ENCODE measurements at regions of chr11 and their contacts with region 1.

Region 1: DNA sequence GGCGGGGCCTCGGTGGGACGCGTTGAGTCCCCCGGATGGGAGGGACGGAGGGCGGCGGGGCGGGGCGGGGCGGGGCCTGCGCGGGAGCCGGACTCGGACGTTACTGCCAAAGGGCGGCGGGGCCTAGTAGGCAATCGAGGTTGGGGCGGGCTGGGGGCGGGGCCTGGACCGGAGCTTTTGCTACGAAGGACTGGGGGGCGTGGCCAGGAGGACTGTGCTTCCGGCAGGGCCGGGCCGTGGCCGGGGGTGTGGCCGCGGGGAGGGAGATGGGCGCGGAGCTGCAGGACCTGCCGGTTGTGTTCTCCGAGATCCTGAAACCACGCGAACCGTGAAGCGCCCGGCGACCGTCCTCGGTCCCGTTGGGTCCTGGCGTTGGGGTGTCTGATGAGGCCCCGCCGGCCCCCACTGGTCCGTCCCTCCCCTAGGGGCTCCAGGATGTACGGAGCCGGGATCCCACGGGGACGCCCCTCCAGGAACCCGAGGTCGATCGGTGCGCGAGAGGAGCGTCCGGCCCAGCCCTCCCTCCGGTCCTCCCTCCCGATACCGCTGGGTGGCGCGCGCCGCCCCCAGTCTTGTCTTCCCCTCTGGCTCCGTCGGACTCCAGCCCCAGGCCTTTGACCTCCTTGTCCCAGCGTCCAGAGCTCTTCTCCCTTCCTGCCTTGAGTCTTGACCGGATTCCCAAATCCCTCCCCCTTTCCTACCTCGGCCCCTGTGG is 648 bp upstream of the NUDT8 start:
- DNase-seq: peak; percentile 97
- ATAC-seq: peak; percentile 79
- H3K4me3 ChIP-seq: peak overlapping the region in 4 of 5 experiments; percentile 68 to 76 (median 74)
- H3K4me3 Mint-ChIP-seq: peak overlapping the region; percentile 90
- H3K27ac ChIP-seq: peak overlapping the region; percentile 85
- H3K27ac Mint-ChIP-seq: peak overlapping the region; percentile 90
- H3K4me1 ChIP-seq: peaks cover 14 to 19% of the 10 kb centered on the region in 2 donors
- H3K4me1 Mint-ChIP-seq: peaks cover 17% of the 10 kb centered on the region
- H3K27me3 ChIP-seq: no peaks in the 10 kb centered on the region
- H3K27me3 Mint-ChIP-seq: no peaks in the 10 kb centered on the region
- CTCF ChIP-seq: peak; percentile 84

Region 2: DNA sequence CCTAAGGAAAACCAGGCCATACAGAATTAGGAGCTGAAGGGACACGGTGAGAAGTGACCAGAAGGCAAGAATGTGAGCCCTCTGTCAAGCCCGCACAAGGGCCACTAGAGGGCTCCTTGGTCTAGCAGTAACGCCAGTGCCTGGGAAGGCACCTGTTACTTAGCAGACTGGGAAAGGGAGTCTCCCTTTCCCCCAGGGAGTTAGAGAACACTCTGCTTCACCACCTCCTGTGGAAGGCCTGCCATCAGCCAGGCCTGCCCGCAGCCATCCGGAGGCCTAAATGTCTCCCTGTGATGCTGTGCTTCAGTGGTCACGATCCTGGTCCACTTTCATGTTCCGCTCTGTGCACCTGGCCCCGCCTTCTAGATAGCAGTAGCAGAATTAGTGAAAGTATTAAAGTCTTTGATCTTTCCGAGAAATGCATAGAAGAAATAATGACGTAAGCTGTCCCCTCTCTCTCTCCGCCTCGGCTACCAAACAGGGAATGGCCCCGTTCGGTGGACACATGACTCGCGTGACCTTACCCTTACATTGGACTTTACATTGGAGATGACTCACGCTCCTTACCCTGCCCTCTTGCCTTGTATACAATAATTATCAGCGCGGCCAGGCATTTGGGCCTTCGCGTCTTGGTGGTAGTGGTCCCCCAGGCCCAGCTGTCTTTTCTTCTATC is 57.5 kb before region 1 on chr11:
- CTCF ChIA-PET with region 1: interaction called, 17 read pairs
- POLR2A ChIA-PET with region 1: no interaction called
- intact Hi-C with region 1: loop called (anchors 1 kb)
- DNase-seq: peak; percentile 69
- ATAC-seq: no peak
- H3K4me3 ChIP-seq: no peak overlapping the region
- H3K4me3 Mint-ChIP-seq: no peak overlapping the region
- H3K27ac ChIP-seq: no peak overlapping the region
- H3K27ac Mint-ChIP-seq: no peak overlapping the region
- H3K4me1 ChIP-seq: no peaks in the 10 kb centered on the region
- H3K4me1 Mint-ChIP-seq: peaks cover 3% of the 10 kb centered on the region
- H3K27me3 ChIP-seq: peaks cover 0 to 33% (median 9%) of the 10 kb centered on the region in 4 experiments
- H3K27me3 Mint-ChIP-seq: peaks cover 28% of the 10 kb centered on the region
- CTCF ChIP-seq: peak; percentile 80

Region 3: GRCh38 chr11:67606492-67607201 is 23.7 kb before region 1 on chr11 and contains the start of gene NDUFV1:
- CTCF ChIA-PET with region 1: interaction called, 15 read pairs
- POLR2A ChIA-PET with region 1: no interaction called
- intact Hi-C with region 1: loop called (anchors 1 kb)
- DNase-seq: peak; percentile 97
- ATAC-seq: peak; percentile 99
- H3K4me3 ChIP-seq: peak within 1 kb of the TSS; percentile 70 to 90 (median 88)
- H3K4me3 Mint-ChIP-seq: peak within 1 kb of the TSS; percentile 95
- H3K27ac ChIP-seq: peak within 1 kb of the TSS; percentile 43 to 72
- H3K27ac Mint-ChIP-seq: peak within 1 kb of the TSS; percentile 90
- H3K4me1 ChIP-seq: peaks cover 13 to 17% of the 10 kb centered on the region in 2 donors
- H3K4me1 Mint-ChIP-seq: peaks cover 20% of the 10 kb centered on the region
- H3K27me3 ChIP-seq: peaks cover 0 to 16% (median 5%) of the 10 kb centered on the region in 4 experiments
- H3K27me3 Mint-ChIP-seq: peaks cover 18% of the 10 kb centered on the region
- CTCF ChIP-seq: peak; percentile 82
- total RNA-seq, gene NDUFV1: 232 and 238 TPM in 2 replicates

Region 4: DNA sequence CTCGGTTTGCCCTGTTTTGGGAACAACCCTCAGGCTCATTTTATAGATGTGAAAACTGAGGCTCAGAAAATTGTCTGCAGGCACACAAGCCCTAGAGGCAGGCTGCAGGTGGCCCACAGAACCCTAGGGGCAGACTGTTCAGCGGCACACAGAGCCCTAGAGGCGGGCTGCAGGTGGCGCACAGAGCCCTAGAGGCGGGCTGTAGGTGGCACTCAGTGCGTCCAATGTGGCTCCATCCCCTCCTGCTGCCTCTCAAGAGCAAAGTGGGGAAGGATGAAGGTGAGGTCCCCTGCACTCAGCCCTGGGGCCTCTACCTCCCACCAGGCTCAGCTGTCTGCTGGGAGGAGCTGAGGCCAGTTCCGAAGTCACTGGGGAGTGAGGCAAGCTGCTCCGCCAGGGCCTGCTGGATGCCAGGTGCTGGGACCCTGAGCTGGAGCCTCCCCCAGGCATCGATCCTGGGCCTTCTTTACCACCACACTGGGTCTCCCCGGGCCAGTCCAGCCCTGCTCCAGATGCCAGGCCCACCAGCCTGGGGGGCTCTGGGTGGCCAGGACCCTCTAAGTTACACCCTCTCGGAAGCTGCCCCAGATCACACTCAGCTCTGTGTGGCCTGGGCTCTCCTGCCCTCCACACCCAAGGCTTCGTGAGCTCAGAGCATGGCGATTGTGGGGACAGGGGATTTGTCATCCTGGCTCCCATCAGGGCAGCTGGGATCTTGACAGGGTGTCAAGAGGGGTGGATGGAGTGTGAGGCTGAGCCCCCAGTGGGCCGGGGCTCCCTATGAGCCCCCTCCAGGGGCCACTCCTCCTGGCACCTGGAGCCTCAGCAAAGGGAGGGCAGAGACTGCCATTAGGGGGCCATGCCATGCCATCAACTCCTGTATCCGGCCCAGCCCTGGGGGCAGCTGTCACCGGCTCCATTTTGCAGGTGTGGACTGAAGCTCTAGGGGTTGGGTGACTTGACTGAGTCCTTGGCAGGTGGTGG is 18.0 kb after region 1 on chr11:
- CTCF ChIA-PET with region 1: interaction called, 105 read pairs
- POLR2A ChIA-PET with region 1: interaction called, 17 read pairs
- intact Hi-C with region 1: loop called (anchors 1 kb)
- DNase-seq: peak; percentile 85
- ATAC-seq: peak; percentile 79
- H3K4me3 ChIP-seq: peak overlapping the region in 2 of 5 experiments; percentile 4 to 11
- H3K4me3 Mint-ChIP-seq: peak overlapping the region; percentile 95
- H3K27ac ChIP-seq: peak overlapping the region; percentile 56 to 66
- H3K27ac Mint-ChIP-seq: peak overlapping the region; percentile 78
- H3K4me1 ChIP-seq: peaks cover 66 to 72% of the 10 kb centered on the region in 2 donors
- H3K4me1 Mint-ChIP-seq: peaks cover 66% of the 10 kb centered on the region
- H3K27me3 ChIP-seq: peaks cover 0 to 5% (median 0%) of the 10 kb centered on the region in 4 experiments
- H3K27me3 Mint-ChIP-seq: no peaks in the 10 kb centered on the region
- CTCF ChIP-seq: peak; percentile 72

Region 5: DNA sequence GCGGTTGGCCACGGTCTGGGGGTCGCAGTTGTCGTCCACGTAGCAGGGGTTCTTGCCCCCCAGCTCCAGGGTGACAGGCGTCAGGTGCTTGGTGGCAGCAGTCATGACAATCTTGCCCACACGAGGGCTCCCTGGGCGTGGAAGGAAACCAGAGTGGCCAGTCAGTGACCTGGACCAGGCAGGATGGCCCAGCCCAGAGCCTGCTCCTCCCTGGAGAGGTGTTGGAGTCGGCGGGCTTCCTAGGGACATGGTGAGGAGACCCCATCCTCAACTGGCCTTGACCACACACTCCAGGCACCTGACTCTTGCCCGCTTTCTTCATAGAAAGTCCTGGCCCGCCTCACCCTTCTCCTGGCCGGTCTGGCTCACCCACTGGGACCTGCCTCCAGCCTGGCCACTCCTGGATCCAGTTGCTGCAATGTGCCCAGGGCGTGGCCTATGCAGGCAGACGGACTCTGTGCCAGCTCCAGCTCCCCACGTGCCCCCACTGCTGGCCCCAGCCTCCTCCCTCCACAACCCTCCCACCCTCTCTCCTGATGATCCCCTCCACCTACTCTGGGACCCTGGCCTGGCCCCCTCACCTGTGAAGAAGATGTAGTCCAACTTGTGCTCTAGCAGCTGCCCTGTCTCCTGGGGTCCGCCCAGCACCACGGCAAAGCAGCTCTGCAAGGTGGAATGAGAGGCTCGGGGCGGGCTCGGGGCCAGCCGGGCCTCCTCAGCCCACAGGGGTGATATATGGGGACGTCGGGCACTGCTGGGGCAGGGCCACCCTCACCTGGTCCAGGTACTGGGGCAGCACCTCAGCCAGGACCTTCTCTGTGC is 35.4 kb after region 1 on chr11:
- CTCF ChIA-PET with region 1: interaction called, 13 read pairs
- POLR2A ChIA-PET with region 1: no interaction called
- intact Hi-C with region 1: no loop called
- DNase-seq: no peak
- ATAC-seq: no peak
- H3K4me3 ChIP-seq: no peak overlapping the region
- H3K4me3 Mint-ChIP-seq: peak overlapping the region; percentile 29
- H3K27ac ChIP-seq: no peak overlapping the region
- H3K27ac Mint-ChIP-seq: peak overlapping the region; percentile 20
- H3K4me1 ChIP-seq: peaks cover 33 to 34% of the 10 kb centered on the region in 2 donors
- H3K4me1 Mint-ChIP-seq: no peaks in the 10 kb centered on the region
- H3K27me3 ChIP-seq: peaks cover 0 to 4% (median 2%) of the 10 kb centered on the region in 4 experiments
- H3K27me3 Mint-ChIP-seq: no peaks in the 10 kb centered on the region
- CTCF ChIP-seq: no peak

Region 6: DNA sequence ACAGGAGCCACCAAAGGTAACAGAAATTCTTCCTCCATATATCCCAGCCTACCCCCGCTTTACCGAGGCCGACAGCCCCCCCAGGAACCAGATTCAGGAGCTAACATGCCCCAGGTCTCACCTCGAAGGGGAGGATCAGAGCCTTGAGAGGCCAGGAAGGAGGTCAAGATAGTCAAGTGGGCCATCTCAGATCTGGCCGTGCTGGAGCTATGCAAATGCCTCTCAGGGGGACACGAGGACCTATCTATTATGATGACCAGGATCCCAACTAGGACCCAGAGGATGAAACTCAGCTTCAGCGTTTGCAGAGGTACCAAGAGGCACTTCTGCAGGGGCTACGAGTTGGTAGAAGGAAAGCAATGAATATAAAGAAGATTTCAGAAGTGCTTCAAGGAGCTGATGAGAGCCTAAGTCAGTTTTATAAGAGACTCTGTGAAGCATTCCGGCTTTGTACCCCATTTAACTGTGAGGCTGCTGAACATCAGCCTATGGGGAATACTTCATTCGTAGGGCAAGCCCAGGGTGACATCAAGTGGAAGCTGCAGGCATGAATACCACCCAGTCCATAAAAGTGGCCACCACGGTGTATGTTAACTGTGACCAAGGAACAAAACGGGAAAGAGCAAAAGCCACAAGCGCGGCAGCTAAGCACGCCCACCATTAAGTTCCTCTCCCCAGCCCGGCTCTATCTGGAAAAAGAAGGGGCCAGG is 1239.0 kb after region 1 on chr11:
- CTCF ChIA-PET with region 1: no interaction called
- POLR2A ChIA-PET with region 1: no interaction called
- intact Hi-C with region 1: no loop called
- DNase-seq: peak; percentile 25
- ATAC-seq: peak; percentile 36
- H3K4me3 ChIP-seq: peak overlapping the region in 2 of 5 experiments; percentile 21 to 23
- H3K4me3 Mint-ChIP-seq: peak overlapping the region; percentile 84
- H3K27ac ChIP-seq: no peak overlapping the region
- H3K27ac Mint-ChIP-seq: no peak overlapping the region
- H3K4me1 ChIP-seq: peaks cover 7 to 8% of the 10 kb centered on the region in 2 donors
- H3K4me1 Mint-ChIP-seq: peaks cover 13% of the 10 kb centered on the region
- H3K27me3 ChIP-seq: peaks cover 0 to 19% (median 11%) of the 10 kb centered on the region in 4 experiments
- H3K27me3 Mint-ChIP-seq: peaks cover 30% of the 10 kb centered on the region
- CTCF ChIP-seq: no peak

Measured in B cell (primary cell).